Activated naive CD8-positive, alpha-beta T cell treated with anti-CD3 and anti-CD28 coated beads, Interleukin-2, amount 10 ng/mL, durations not matched to agents 7 days and 5 days (primary cell): ENCODE measurements at regions of chr12 and their contacts with region 1.

Region 1: DNA sequence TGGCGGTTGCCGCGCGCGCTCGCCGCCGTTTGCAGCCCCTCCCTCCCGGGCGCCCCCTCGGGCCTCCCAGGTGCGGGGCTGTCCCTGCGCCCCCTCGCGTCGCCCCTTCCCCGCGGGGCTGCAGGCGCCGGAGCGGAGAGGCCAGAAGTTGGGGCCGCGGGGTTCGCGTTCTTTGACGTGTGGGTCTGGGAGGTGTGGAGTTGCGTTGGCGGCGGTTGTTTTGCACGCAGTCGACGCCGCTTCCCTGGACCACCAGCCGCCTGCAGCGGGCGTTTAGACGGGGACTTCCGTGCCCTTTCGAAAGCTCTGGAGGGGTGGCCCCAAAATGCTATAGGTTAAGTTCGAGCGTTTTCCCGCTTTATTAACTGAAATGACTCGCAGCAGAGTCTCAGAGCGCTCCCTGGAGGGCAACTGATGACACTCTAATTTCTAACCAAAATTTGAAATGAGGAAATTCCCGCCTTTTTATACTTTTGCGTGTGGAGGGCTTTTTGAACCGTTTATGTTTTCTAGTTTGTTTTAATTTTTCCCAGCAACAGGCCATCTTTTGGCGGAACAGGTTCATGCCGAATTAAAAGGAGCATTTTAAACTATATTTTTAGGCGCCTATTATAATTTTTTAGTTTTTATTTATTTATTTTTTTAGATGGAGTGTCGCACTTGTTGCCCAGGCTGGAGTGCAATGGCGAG is 939 bp downstream of the TMPO start:
- DNase-seq: peak; percentile 80
- ATAC-seq: peak; percentile 67
- H3K4me3 Mint-ChIP-seq: peak overlapping the region; percentile 95
- H3K27ac Mint-ChIP-seq: peak overlapping the region; percentile 97
- H3K4me1 Mint-ChIP-seq: peaks cover 24% of the 10 kb centered on the region
- H3K27me3 Mint-ChIP-seq: no peaks in the 10 kb centered on the region

Region 2: DNA sequence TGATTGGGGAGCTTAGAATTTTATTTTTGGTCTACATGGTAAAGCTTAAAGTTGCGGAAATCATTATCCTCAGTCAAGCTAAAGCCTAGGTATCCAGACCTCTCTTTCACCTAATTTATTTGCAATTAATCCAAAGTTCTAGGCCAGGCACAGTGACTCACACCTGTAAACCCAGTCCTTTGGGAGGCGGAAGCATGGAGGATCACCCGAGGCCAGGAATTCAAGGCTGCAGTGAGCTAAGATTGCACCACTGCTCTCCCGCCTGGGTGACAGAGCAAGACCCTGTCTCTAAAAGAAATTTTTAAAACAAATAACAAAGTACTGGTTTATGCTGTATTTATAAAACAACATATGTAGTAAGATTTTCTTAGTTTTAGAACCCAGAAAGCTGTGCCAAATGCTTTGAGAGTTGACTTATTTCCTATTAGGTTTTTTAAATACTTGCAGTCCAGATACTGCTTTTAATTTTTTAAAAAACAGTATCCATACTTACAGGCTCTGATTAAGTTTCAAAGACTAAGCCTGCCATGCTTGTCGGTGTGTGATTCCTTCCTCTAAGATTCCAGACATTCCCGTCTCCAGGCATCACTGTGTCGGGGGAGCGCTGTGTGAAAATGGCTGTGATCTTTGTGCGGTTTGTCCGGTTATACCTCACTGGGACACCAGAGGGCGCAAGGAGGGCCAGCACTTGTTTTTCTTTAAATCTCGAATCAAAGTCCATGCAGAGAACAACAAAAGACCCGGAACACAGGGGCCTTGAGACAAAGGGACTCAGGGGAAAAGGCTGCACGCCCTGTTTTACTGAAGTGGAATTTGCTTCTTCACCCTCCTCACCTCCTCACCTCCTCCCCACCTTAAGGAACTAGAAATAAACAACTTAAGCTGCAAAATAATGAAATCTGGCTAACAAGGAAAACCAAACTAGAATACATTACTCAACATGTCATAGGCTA is 25.6 kb before region 1 on chr12:
- POLR2A ChIA-PET with region 1: interaction called, 98 read pairs
- DNase-seq: peak; percentile 79
- ATAC-seq: peak; percentile 89
- H3K4me3 Mint-ChIP-seq: peak overlapping the region; percentile 74
- H3K27ac Mint-ChIP-seq: peak overlapping the region; percentile 94
- H3K4me1 Mint-ChIP-seq: peaks cover 8% of the 10 kb centered on the region
- H3K27me3 Mint-ChIP-seq: peaks cover 7% of the 10 kb centered on the region

Region 3: GRCh38 chr12:98503592-98504367 is 12.5 kb before region 1 on chr12:
- POLR2A ChIA-PET with region 1: interaction called, 110 read pairs
- DNase-seq: peak; percentile 93
- ATAC-seq: peak; percentile 84
- H3K4me3 Mint-ChIP-seq: peak overlapping the region; percentile 94
- H3K27ac Mint-ChIP-seq: peak overlapping the region; percentile 95
- H3K4me1 Mint-ChIP-seq: peaks cover 18% of the 10 kb centered on the region
- H3K27me3 Mint-ChIP-seq: peaks cover 10% of the 10 kb centered on the region

Region 4: DNA sequence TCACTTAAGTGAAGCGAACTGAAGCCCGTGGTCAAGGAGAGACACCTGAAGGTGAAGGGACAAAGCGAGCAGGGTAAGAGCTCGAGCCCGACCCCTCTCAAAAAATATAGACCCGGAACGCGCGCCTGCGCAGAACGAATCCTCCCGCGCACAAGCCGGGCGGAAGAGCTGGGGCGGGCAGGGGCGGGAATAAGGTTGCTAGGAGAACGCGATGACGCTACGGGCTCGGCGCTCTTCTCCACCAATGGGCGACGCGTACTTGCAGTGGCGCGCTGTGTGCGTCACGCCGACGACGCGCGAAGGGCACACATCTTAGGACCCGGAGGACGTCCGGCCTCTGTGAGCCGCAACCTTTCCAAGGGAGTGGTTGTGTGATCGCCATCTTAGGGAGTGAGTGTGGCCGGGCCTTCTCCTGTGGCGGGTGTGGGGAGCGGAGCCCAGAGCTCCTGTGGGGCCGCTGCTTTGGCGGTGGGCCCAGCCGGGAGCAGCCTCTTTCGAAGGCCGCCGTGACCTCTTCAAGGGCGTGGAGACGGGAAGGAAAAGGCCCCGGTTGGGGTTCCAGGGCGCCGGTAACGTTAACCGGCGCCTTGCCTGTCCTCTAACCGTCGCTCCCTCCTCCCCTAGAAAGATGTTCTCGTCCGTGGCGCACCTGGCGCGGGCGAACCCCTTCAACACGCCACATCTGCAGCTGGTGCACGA is 77.2 kb after region 1 on chr12 and contains the start of gene SLC25A3:
- POLR2A ChIA-PET with region 1: interaction called, 23 read pairs
- DNase-seq: peak; percentile 91
- ATAC-seq: peak; percentile 98
- H3K4me3 Mint-ChIP-seq: peak within 1 kb of the TSS; percentile 94
- H3K27ac Mint-ChIP-seq: peak within 1 kb of the TSS; percentile 99
- H3K4me1 Mint-ChIP-seq: peaks cover 21% of the 10 kb centered on the region
- H3K27me3 Mint-ChIP-seq: no peaks in the 10 kb centered on the region
- total RNA-seq, gene SLC25A3: 326 to 337 TPM

Region 5: DNA sequence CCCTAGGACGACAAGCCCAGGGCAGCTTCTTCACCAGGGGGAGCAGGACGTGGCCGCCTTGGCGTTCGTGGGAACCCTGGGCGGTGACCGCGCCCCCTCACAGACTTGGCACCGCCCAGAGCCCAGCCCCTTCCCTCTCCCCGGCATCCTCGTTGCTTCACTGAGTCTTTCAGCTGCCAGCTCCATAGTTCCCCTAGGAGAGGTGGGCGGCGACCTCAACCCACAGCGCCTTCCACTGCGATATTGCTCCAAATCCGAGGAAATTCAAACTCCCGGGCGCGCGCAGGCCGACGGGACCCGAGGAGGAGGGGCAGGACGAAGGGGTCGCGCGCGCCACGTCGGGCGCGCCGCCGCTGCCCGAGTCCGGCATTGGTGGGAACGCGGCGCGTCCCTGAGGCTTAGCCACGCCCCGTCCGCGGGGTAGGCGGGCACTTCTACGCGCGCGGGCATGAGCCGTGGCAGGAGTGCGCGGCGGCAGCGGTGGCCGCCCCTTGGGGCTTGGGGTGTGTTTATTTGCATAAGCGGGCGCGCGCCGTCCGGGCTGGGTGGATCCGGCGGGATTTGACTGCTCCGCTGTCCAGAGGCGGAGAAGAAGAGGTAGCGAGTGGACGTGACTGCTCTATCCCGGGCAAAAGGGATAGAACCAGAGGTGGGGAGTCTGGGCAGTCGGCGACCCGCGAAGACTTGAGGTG is 128.5 kb after region 1 on chr12 and contains the starts of genes APAF1 and IKBIP:
- POLR2A ChIA-PET with region 1: interaction called, 16 read pairs
- DNase-seq: peak; percentile 99
- ATAC-seq: peak; percentile 85
- H3K4me3 Mint-ChIP-seq: peak within 1 kb of the TSS; percentile 97
- H3K27ac Mint-ChIP-seq: peak within 1 kb of the TSS; percentile 95
- H3K4me1 Mint-ChIP-seq: peaks cover 29% of the 10 kb centered on the region
- H3K27me3 Mint-ChIP-seq: no peaks in the 10 kb centered on the region
- total RNA-seq, gene APAF1: 32.0 to 32.8 TPM
- total RNA-seq, gene IKBIP: 23.4 to 24.0 TPM